ENCODE measurements at regions of chr11 and their contacts with region 1.

Region 1: DNA sequence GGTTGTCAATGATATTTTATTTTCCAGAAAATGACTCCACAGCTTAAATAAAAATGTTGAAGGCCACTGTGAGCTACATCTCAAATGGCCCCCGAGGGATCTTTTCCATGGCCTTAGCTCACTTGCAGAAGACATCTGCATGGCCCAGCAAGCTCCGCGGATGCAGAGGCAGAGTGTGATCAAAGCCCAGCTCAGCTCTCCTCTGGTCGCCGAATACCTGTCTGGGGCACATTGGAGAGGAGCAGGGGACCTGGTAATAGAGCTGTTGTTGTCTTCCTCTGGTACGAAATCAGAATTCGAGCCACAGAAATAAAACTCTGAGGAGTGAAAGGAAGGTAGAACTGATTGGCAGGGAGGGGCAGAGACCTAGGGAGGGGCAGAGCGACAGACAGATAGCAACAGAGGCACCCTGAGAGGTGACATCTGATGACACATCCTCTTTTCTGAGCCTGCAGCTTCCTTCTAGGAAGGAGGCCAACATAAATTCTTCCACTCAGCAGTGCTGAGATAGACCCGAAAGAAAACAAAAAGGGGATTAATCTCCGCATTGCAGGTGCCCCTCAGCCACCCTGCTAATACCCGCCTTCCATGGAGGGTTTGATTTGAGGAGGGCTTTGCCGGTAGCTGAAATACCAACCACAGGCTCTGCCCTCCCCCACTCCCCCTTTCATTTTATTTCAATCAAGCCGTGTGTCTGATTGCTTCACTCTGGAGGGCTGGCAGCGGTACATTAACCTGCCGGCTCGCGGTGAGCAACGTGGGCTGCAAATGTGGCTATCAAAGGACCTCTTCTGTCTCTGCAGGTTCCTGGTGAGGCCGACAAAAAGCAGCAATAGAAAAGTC is 759.4 kb downstream of the OPCML start:
- DNase-seq: no peak
- H3K4me3 ChIP-seq: no peak overlapping the region
- H3K27ac ChIP-seq: no peak overlapping the region
- H3K4me1 ChIP-seq: no peaks in the 10 kb centered on the region
- H3K27me3 ChIP-seq: no peaks in the 10 kb centered on the region
- CTCF ChIP-seq: no peak
- POLR2A ChIP-seq: no peak

Region 2: GRCh38 chr11:132803436-132803835 is 30.5 kb after region 1 on chr11:
- intact Hi-C with region 1: loop called (anchors 1 kb)
- DNase-seq: no peak
- H3K4me3 ChIP-seq: no peak overlapping the region
- H3K27ac ChIP-seq: no peak overlapping the region
- H3K4me1 ChIP-seq: no peaks in the 10 kb centered on the region
- H3K27me3 ChIP-seq: no peaks in the 10 kb centered on the region
- CTCF ChIP-seq: no peak
- POLR2A ChIP-seq: no peak

Measured in vagina (tissue), 2 donors.